ENCODE measurements at regions of chr7 and their contacts with region 1.

Region 1: DNA sequence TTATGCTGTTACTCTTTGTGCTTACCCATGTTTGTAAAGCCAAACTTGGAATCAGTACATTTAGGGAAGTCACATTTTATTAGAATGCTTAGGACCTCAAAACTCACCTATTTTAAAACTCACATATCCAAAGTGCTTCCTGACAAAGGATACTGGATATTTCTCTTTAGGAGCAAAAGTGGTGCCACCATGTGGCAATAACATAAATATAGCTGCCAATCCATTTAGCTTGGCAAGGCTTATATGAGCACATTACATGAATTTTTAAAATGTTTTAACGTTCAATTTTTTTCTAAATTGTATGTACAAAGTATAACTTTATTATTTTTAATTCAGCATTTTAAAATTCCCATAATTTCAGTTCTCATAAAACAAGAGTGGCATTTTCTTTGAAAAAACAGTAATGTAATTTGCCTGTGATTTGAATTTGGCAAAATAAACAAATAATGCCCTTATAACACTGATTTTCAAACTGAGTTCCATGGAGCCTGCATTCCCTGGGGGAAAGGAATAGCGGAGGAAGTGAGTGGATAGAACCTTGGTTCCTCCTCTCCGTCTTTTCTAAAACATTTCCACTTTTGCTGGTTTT is 75.4 kb downstream of the HDAC9 start:
- DNase-seq: peak in 1 of 4 donors; percentile 32
- ATAC-seq: no peak
- H3K4me3 ChIP-seq: no peak overlapping the region
- H3K27ac ChIP-seq: no peak overlapping the region
- H3K4me1 ChIP-seq: no peaks in the 10 kb centered on the region
- H3K27me3 ChIP-seq: no peaks in the 10 kb centered on the region
- CTCF ChIP-seq: peak; percentile 6 to 62 (median 46)
- POLR2A ChIP-seq: no peak

Region 2: DNA sequence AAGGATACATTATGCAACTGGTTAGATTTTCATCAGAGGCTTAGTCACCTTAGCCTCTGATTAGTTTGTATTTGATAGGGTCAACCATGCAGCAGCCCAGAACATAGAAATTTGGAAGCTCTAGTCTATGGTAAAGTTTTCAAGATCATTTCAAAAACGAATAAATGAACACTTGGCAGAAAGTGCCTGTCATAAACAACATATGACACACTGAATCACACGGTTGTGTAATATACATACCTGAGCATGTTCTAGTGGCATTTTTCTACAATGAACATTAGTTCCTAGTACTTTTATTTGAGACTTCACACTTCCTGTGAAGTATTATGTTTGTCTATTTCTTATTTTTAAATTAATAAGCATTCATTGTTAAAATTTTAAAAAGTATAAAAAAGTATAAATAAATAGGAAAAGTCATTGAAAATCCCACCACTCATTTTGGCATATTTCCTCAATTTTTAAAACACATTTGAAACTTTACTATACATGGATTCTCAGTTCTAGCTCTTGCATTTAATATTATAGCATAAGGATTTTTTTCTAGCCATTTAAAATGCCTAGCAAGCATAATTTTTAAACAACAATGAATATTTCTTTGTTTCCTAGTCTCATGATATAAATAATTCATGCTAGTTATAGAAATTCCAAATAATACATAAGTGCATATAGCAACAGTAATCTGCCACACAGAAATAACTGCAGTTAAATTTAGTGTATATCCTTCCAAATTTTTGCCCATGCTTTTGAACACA is 517.6 kb before region 1 on chr7:
- intact Hi-C with region 1: no loop called
- DNase-seq: no peak
- ATAC-seq: no peak
- H3K4me3 ChIP-seq: no peak overlapping the region
- H3K27ac ChIP-seq: no peak overlapping the region
- H3K4me1 ChIP-seq: no peaks in the 10 kb centered on the region
- H3K27me3 ChIP-seq: no peaks in the 10 kb centered on the region
- CTCF ChIP-seq: no peak
- POLR2A ChIP-seq: no peak

Region 3: DNA sequence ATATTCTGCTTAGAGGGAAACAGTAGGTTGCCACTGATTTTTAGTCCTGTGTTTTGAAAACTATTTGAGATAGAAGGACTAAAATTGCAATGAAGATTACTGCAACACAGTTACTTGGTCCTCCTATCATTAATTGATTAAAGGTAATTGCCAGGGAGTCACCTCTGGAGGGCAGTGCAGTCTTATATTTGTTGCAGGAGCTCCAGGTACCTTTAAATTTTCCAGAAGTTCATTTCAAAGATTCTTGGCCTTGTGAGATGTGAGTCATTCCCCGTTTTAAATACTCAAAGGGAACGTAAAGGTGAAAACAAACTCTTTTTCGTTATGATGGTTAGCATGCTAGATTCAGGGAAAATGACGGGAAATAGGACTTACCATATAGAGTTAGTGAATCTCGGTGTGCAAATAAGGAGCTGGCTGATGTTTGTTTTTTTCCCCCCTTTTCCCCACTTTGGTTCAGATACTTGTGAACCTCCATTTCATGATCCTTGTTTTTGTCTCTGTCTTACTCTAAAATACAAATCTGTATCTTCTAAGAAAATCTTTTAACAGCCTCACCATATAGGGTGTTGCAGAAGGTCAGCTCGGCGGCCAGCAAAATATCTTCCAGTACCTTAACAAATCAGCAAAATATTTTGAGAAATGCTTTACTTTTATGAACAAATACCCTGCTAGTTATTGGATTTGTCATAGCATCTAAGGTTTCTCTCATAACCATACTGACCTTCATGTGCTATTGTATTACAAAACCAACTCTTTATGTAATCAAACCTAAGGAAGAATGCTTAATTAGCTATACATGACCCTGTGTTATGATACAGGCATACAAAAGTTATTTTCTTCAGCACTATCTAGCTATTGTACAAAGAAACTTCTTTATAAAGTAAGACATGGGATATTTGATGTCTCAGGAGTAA is 218.4 kb before region 1 on chr7:
- intact Hi-C with region 1: loop called (anchors 5 kb)
- DNase-seq: peak; percentile 41 to 59 (median 55)
- ATAC-seq: peak; percentile 68
- H3K4me3 ChIP-seq: no peak overlapping the region
- H3K27ac ChIP-seq: no peak overlapping the region
- H3K4me1 ChIP-seq: no peaks in the 10 kb centered on the region
- H3K27me3 ChIP-seq: no peaks in the 10 kb centered on the region
- CTCF ChIP-seq: peak in 6 of 7 experiments; percentile 52 to 66 (median 64)
- POLR2A ChIP-seq: no peak

Region 4: GRCh38 chr7:18727115-18727870 is 156.3 kb after region 1 on chr7:
- intact Hi-C with region 1: no loop called
- DNase-seq: no peak
- ATAC-seq: no peak
- H3K4me3 ChIP-seq: no peak overlapping the region
- H3K27ac ChIP-seq: no peak overlapping the region
- H3K4me1 ChIP-seq: no peaks in the 10 kb centered on the region
- H3K27me3 ChIP-seq: no peaks in the 10 kb centered on the region
- CTCF ChIP-seq: no peak
- POLR2A ChIP-seq: no peak